GM18951 (cell line): ENCODE measurements at regions of chr2 and their contacts with region 1.

Region 1: GRCh38 chr2:161946489-161947107 is 127.4 kb downstream of the DPP4 start:
- POLR2A ChIP-seq: no peak

Region 2: GRCh38 chr2:161586517-161587167 is 360.0 kb before region 1 on chr2:
- in situ Hi-C with region 1: loop called (anchors 5 kb)
- POLR2A ChIP-seq: no peak

Region 3: DNA sequence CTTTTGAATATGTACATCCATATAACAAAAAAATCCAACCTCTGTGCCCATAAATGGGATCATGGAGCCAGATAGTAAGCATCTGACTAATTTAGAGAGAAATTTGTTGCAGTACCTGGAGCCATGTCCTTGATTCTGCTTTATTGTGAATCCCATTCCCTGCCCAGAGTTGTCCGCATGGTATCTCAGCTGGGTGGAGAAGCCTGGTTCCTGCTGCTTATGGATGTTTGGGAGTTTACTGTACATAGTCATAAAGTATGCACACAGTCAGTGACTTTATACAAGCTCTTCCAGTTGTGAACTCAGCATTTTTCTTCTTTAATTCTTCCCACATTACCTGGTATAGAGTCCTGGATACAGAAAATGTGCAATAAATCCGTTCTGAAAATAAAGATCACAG is 1443.2 kb after region 1 on chr2:
- in situ Hi-C with region 1: no loop called
- POLR2A ChIP-seq: no peak